Naive thymus-derived CD4-positive, alpha-beta T cell (primary cell): ENCODE measurements at regions of chr19 and their contacts with region 1.

Region 1: DNA sequence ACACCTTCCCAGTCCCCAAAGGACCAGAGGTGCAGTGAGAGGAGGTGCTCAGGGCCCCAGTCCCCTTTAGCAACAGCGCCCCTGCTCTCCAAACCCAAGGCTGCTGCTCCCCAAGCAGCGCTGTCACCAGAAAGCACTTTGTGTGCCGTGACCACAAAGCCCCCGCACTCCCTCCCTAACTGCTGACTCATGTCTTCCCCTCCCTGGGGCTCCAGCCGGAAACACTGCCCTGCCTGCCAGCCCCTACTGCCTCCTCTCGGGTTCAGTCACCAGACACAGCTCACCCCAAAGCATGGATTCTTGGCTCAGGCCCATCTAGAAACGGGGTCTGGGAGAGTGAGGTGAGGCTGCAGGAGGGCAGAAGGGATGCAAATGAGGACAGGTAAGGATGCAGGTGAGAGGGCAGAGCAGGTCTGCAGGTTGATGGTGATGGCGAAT is 4.9 kb upstream of the TNFSF14 start:
- DNase-seq: peak; percentile 21 to 90 (median 54)
- ATAC-seq: peak; percentile 77
- H3K4me3 ChIP-seq: peak overlapping the region; percentile 48
- H3K4me3 Mint-ChIP-seq: peak overlapping the region in 4 of 10 donors; percentile 4 to 82 (median 32)
- H3K27ac ChIP-seq: no peak overlapping the region
- H3K27ac Mint-ChIP-seq: peak overlapping the region in 2 of 9 donors; percentile 46 to 88
- H3K4me1 ChIP-seq: peaks cover 22 to 34% of the 10 kb centered on the region in 2 donors
- H3K4me1 Mint-ChIP-seq: peaks cover 27 to 65% (median 41%) of the 10 kb centered on the region in 7 donors
- H3K27me3 ChIP-seq: no peaks in the 10 kb centered on the region
- H3K27me3 Mint-ChIP-seq: no peaks in the 10 kb centered on the region

Region 2: DNA sequence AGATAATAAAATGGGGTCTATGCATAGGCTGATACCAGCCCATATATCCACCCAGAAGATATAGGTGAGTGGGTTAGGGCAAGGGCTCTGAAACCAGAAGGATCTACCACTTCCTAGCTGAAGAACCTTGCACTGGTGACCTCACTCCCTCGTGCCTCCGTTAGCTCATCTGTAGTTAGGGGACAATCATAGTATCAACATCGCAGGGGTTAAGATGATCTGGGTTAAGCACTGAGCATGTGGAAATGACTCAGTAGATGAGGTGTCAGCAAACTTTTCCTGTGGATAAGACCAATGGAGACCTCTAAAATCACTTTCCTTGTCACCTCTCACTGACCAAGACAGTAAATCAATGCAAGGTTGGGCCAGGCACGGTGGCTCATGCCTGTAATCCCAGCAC is 35.4 kb before region 1 on chr19:
- CTCF ChIA-PET with region 1: interaction called, 4 read pairs
- POLR2A ChIA-PET with region 1: no interaction called
- intact Hi-C with region 1: loop called in 1 of 2 experiments (anchors 2 kb)
- DNase-seq: no peak
- ATAC-seq: no peak
- H3K4me3 ChIP-seq: no peak overlapping the region
- H3K4me3 Mint-ChIP-seq: peak overlapping the region in 1 of 10 donors; percentile 5
- H3K27ac ChIP-seq: no peak overlapping the region
- H3K27ac Mint-ChIP-seq: peak overlapping the region in 1 of 9 donors; percentile 74
- H3K4me1 ChIP-seq: peaks cover 17 to 22% of the 10 kb centered on the region in 2 donors
- H3K4me1 Mint-ChIP-seq: peaks cover 6 to 45% (median 22%) of the 10 kb centered on the region in 7 donors
- H3K27me3 ChIP-seq: no peaks in the 10 kb centered on the region
- H3K27me3 Mint-ChIP-seq: no peaks in the 10 kb centered on the region

Region 3: DNA sequence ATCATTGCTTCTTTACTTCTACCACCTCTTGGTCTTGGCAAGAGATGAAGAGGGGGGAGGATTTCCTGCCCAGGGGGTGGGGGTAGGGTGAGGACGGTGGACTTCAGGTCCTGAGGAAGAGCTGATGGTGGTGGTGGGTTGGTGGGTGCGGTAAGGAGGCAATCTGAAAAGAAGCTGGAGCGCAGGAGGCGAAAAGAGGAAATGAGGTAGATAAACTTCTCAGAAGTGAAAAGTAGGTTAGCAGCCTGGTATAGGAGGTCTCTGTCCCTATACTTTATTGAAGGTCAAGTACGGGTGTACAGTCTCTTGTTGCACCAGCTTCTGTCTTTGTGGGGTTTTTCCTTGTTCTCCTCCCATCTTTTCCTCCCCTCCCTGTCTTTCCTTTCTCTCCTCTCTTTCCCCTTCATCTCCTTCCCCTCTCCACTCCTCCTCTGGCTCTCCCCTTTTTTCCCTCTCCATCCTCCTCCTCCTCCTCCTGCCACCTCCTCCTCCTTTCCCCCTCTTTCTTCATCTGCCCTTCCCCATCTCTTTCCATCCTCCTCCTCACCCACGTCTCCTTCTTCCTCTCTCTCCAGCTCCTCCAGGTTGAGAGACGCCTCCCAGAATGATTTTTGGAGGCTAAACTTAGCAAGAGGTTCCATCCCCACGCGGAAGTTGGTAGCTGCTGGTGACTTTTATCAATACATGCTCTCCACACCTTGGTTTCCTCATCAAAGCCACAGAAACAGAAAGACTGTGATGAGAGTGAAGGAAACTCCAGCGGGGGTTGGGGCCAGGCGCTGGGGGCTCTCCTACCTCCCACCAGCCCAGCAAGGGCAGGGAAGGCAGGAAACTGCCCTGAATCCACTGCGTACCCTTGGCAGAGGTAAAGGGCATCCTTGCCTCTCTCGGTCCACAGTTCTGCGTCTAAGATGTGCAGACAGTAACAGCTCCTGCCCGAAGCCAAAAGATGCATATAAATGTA is 20.3 kb before region 1 on chr19:
- CTCF ChIA-PET with region 1: no interaction called
- POLR2A ChIA-PET with region 1: no interaction called
- intact Hi-C with region 1: loop called in 1 of 2 experiments (anchors 2 kb)
- DNase-seq: peak in 3 of 9 donors; percentile 14 to 75 (median 33)
- ATAC-seq: peak; percentile 76
- H3K4me3 ChIP-seq: peak overlapping the region; percentile 51
- H3K4me3 Mint-ChIP-seq: peak overlapping the region; percentile 59 to 96 (median 78)
- H3K27ac ChIP-seq: peak overlapping the region; percentile 62
- H3K27ac Mint-ChIP-seq: peak overlapping the region; percentile 62 to 99 (median 82)
- H3K4me1 ChIP-seq: peaks cover 17 to 21% of the 10 kb centered on the region in 2 donors
- H3K4me1 Mint-ChIP-seq: peaks cover 20 to 63% (median 25%) of the 10 kb centered on the region in 7 donors
- H3K27me3 ChIP-seq: no peaks in the 10 kb centered on the region
- H3K27me3 Mint-ChIP-seq: peaks cover 0 to 6% (median 0%) of the 10 kb centered on the region in 5 donors

Region 4: DNA sequence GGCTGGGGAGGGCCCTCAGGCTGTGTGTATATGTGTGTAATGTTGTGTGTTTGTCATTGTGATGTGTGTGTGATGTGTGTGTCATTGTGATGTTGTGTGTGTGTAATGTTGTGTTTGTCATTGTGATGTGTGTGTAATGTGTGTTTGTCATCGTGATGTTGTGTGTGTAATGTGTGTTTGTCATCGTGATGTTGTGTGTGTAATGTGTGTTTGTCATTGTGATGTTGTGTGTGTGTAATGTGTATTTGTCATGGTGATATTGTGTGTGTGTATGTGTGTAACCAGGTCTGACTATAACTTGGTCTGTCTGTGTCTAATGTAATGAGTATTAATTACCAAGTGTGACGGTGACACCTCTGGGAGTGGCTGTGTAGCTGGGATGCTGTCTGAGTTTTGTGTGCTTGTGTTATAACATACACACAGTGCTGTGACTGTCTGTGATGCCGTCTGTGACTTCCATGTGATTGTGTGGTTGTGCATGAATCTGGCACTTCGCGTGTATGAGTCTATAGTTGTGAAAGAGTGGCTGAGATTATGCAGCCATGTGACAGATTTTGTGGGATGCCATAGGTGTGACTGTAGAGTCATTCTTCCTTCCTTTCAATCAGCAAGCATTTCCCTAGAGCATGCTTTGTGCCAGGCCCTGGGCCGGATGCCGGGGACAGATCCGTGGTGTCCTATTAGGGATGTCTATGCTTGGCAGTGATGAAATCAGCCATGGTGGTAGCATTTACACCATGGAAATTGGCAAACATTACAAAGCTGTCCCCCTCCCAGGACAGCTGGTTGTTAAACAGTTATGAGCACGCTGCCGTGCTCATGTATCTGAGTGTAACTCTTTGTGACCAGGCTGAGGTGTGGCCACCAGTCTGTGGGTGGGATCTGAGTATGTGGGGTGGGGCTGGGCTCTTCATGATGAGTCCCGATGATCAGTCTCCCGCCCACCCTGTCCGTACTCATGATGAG is 11.4 kb before region 1 on chr19:
- CTCF ChIA-PET with region 1: no interaction called
- POLR2A ChIA-PET with region 1: interaction called, 3 read pairs
- intact Hi-C with region 1: loop called in 1 of 2 experiments (anchors 1 kb)
- DNase-seq: no peak
- ATAC-seq: peak; percentile 62
- H3K4me3 ChIP-seq: no peak overlapping the region
- H3K4me3 Mint-ChIP-seq: no peak overlapping the region
- H3K27ac ChIP-seq: no peak overlapping the region
- H3K27ac Mint-ChIP-seq: peak overlapping the region in 1 of 9 donors; percentile 59
- H3K4me1 ChIP-seq: peaks cover 0 to 48% of the 10 kb centered on the region in 2 donors
- H3K4me1 Mint-ChIP-seq: peaks cover 1 to 29% (median 20%) of the 10 kb centered on the region in 7 donors
- H3K27me3 ChIP-seq: no peaks in the 10 kb centered on the region
- H3K27me3 Mint-ChIP-seq: peaks cover 0 to 3% (median 0%) of the 10 kb centered on the region in 5 donors